Heart right ventricle (tissue), 16 donors: ENCODE measurements at regions of chr19 and their contacts with region 1.

Region 1: DNA sequence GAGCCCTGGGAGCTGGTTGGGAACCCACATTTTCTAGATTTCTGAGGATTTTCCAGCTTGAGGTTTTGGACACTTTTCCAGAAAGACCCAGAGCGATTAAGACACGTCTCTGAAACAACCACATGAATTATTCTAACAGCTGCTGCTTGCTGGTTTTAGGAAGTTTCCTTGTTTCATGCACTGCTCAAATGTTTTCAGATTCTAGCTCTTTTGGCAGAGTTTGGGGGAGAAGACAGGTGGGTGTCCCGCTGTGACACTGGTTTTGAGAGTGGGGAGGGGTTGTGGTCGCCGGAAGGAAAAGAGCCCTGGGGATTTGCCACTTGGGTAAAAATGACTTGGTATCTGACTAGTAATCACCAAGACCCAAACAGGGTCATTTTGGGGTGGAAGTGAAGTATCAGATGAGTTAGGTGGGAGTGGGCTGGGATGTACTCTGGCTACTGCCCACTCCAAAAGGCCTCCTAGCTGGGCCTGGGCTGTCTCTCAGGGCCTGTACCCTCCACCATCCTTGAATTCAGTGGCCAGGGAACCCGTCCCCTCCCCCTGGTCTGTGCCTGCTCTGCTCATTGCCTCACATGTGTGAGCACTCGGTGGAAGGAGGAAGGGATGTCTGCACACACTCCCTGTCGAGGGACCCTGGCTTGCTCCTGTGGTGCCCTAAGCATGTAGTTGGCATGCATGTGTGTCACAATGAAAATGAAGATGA is 13.2 kb downstream of the GATAD2A start:
- DNase-seq: no peak
- ATAC-seq: peak in 4 of 8 donors; percentile 8 to 26 (median 21)
- H3K4me3 ChIP-seq: no peak overlapping the region
- H3K27ac ChIP-seq: peak overlapping the region in 1 of 10 donors; percentile 2
- H3K4me1 ChIP-seq: peaks cover 11 to 74% (median 51%) of the 10 kb centered on the region in 9 donors
- H3K27me3 ChIP-seq: no peaks in the 10 kb centered on the region
- CTCF ChIP-seq: no peak

Region 2: GRCh38 chr19:19451429-19452242 is 32.9 kb after region 1 on chr19:
- intact Hi-C with region 1: loop called in 2 of 10 experiments (anchors 5 kb)
- DNase-seq: no peak
- ATAC-seq: no peak
- H3K4me3 ChIP-seq: no peak overlapping the region
- H3K27ac ChIP-seq: peak overlapping the region in 3 of 10 donors; percentile 16 to 81 (median 60)
- H3K4me1 ChIP-seq: peaks cover 0 to 67% (median 44%) of the 10 kb centered on the region in 9 donors
- H3K27me3 ChIP-seq: no peaks in the 10 kb centered on the region
- CTCF ChIP-seq: no peak

Region 3: GRCh38 chr19:19459707-19460251 is 41.1 kb after region 1 on chr19:
- intact Hi-C with region 1: loop called in 2 of 10 experiments (anchors 5 kb)
- DNase-seq: no peak
- ATAC-seq: peak in 7 of 8 donors; percentile 16 to 60 (median 37)
- H3K4me3 ChIP-seq: peak overlapping the region in 4 of 10 donors; percentile 5 to 37 (median 18)
- H3K27ac ChIP-seq: peak overlapping the region; percentile 49 to 90 (median 72)
- H3K4me1 ChIP-seq: peaks cover 36 to 83% (median 71%) of the 10 kb centered on the region in 9 donors
- H3K27me3 ChIP-seq: no peaks in the 10 kb centered on the region
- CTCF ChIP-seq: no peak

Region 4: GRCh38 chr19:19488875-19489690 is 70.4 kb after region 1 on chr19:
- intact Hi-C with region 1: no loop called
- DNase-seq: peak; percentile 61 to 87
- ATAC-seq: peak; percentile 42 to 84 (median 73)
- H3K4me3 ChIP-seq: peak overlapping the region in 7 of 10 donors; percentile 18 to 47 (median 26)
- H3K27ac ChIP-seq: peak overlapping the region; percentile 36 to 91 (median 80)
- H3K4me1 ChIP-seq: peaks cover 22 to 66% (median 49%) of the 10 kb centered on the region in 9 donors
- H3K27me3 ChIP-seq: no peaks in the 10 kb centered on the region
- CTCF ChIP-seq: no peak